OCI-LY7 (cell line): ENCODE measurements at regions of chr4 and their contacts with region 1.

Region 1: DNA sequence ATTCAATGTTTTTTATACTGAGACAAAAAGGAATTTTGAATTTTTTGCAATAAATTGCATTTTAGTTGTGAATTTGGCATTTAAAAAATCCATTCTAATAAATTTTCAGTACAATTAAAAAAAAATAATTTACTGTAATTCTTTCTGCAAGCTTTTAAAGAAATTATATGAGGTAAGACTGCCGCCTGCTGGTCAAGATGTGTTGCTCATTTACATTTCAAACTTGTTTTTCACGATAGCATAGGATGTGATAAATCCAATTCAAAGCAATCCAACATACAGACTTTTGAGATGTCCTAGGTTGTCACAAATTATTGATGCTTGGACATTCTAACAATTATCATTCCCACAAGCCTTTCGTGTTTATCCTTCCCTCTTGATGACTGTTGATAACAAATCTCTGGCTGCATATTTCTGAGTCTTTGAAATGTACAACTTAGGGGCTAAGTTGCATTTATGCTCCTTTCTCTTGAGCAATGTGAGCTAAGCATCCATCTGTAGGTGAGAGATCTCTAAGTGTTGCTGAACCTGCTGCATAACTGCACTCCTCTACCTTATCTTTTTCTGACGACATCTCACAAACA is 21.7 kb upstream of the MFAP3L start:
- DNase-seq: peak; percentile 62
- H3K4me3 ChIP-seq: no peak overlapping the region
- H3K27ac ChIP-seq: no peak overlapping the region
- H3K4me1 ChIP-seq: no peaks in the 10 kb centered on the region
- CTCF ChIP-seq: peak; percentile 92

Region 2: DNA sequence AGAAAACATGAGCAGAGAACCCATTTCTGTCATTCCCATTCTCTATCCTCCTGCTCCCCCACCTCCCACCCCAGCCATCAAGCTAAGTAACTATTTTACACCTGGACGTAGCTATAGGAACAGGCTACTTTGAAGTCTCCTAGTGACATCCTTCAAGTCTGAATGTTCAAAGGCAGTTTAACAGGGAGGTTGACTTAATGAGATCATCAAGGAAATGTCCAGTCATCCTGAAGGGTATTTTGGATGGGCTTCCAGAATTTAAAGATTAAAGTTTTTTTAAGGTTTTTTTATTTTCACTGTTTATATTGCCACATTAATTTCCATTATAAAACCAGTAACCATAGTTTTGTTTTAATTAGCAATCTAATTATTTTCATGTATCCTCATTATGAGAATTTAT is 331.2 kb before region 1 on chr4:
- CTCF ChIA-PET with region 1: no interaction called
- POLR2A ChIA-PET with region 1: no interaction called
- intact Hi-C with region 1: no loop called
- DNase-seq: no peak
- H3K4me3 ChIP-seq: no peak overlapping the region
- H3K27ac ChIP-seq: no peak overlapping the region
- H3K4me1 ChIP-seq: no peaks in the 10 kb centered on the region
- CTCF ChIP-seq: no peak

Region 3: GRCh38 chr4:169810325-169811323 is 237.2 kb before region 1 on chr4:
- CTCF ChIA-PET with region 1: no interaction called
- POLR2A ChIA-PET with region 1: interaction called, 4 read pairs
- intact Hi-C with region 1: loop called (anchors 2 kb)
- DNase-seq: peak; percentile 71
- H3K4me3 ChIP-seq: no peak overlapping the region
- H3K27ac ChIP-seq: no peak overlapping the region
- H3K4me1 ChIP-seq: no peaks in the 10 kb centered on the region
- CTCF ChIP-seq: peak; percentile 97